ENCODE measurements at regions of chr1 and their contacts with region 1.

Region 1: GRCh38 chr1:235504496-235505222 is 407 bp upstream of the B3GALNT2 start:
- DNase-seq: peak; percentile 99
- H3K4me3 ChIP-seq: peak overlapping the region; percentile 74
- H3K27ac ChIP-seq: peak overlapping the region; percentile 81
- H3K4me1 ChIP-seq: peaks cover 36% of the 10 kb centered on the region
- CTCF ChIP-seq: peak; percentile 80

Region 2: DNA sequence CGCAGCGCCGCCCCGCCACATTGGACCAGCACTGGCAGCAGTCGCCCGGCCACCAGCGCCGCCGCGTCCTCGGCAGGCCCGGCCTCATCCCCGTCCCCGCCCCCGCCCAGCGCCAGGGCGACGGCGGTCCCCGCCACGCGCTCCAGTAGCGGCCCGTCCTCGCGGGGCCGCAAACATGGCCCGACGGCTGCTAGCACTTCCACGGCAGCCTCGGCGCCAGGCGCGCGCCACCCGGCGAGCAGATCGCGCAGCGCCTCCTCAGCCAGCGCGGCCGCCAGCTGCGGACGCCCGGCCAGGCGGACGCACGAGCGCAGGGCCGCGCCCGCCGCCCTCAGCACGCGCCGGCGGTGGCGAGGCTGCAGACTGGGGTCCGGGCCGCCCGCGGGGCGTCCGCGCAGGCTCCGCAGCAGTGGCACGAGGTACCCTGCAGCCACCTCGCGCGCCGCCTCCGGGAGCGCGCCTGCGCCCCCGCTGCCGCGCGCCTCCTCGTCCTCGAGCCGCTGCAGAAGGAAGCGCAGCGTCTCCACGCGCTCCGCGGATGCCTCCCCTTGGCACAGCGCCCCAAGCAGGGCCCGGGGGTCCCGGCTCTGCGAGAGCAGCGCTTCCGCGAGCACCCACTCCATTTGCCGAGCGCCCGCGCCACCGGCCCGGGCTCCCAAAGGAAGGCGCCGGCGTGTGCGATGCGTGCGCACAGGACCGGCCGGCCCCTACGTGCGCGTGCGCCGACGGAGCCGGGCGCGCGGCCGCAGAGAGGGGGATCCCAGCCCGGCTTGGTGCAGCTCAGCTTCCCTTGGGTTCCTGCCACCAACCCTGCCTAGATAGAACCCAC is 1026.0 kb before region 1 on chr1 and contains the start of gene TARBP1:
- CTCF ChIA-PET with region 1: no interaction called
- POLR2A ChIA-PET with region 1: interaction called, 3 read pairs
- intact Hi-C with region 1: loop called (anchors 10 kb)
- DNase-seq: peak; percentile 90
- H3K4me3 ChIP-seq: peak within 1 kb of the TSS; percentile 72
- H3K27ac ChIP-seq: peak within 1 kb of the TSS; percentile 81
- H3K4me1 ChIP-seq: peaks cover 49% of the 10 kb centered on the region
- CTCF ChIP-seq: 0 out of 2 replicates have a peak, but pooled peaks have one; percentile 13
- total RNA-seq, gene TARBP1: 30.0 and 30.5 TPM in 2 replicates

Region 3: DNA sequence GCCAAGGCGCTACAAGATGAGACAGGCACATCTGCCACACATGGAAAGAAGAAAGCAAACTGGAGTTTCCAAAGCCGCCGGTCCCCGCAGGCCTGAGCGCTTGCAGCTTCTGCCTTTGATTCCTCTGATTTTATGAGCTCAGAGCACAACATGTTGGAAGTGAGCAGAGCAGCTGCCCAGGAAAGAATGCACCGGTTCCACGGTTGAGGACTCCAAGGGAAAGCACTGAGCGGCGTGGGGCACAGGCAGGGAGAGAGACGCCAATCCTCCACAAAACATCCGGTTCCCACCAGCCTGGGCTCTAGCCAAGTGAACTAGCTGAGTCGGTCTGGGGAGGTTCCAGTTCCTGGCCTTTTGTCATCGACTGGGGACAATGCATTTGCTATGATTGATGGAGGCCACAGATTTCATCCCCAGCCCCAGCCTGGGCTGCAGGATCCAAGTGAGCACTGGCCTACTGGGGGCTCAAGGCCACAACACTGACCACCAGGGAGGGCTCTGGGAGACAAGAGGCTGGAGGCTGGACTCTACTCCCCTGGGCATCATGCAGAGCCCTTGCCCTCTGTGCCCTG is 641.6 kb before region 1 on chr1:
- CTCF ChIA-PET with region 1: no interaction called
- POLR2A ChIA-PET with region 1: no interaction called
- intact Hi-C with region 1: no loop called
- DNase-seq: no peak
- H3K4me3 ChIP-seq: no peak overlapping the region
- H3K27ac ChIP-seq: no peak overlapping the region
- H3K4me1 ChIP-seq: peaks cover 8% of the 10 kb centered on the region
- CTCF ChIP-seq: no peak

Region 4: DNA sequence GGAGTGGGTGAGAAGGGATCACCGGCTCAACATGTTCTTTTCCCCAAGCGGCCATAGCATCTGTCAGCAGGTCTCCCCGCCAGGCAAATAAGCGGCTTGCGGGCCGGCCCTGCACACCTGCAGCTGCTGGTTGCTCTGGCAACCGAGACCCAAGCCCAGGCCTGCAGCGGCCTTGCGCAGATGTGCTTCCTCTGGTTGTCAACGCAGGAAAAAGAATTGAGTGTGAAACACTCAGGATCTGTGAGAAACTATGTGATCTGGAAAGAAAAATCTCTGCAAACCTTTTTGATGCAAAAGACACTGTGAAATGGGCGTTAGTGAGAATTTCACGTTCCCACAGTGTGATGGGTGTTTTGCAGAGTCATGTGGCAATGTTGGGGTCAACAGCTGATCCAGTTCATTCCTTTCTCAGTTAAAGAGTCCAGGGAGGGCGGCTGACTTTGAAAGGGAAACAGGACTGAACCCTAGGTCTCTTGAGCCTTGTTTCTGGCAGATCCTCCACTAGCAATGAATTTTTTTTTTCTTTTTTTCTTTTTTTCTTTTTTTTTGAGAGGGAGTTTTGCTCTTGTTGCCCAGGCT is 404.4 kb before region 1 on chr1:
- CTCF ChIA-PET with region 1: no interaction called
- POLR2A ChIA-PET with region 1: interaction called, 4 read pairs
- intact Hi-C with region 1: loop called (anchors 5 kb)
- DNase-seq: peak; percentile 79
- H3K4me3 ChIP-seq: peak overlapping the region; percentile 6
- H3K27ac ChIP-seq: peak overlapping the region; percentile 7
- H3K4me1 ChIP-seq: peaks cover 29% of the 10 kb centered on the region
- CTCF ChIP-seq: no peak

Region 5: GRCh38 chr1:235843461-235843961 is 338.9 kb after region 1 on chr1:
- CTCF ChIA-PET with region 1: interaction called, 6 read pairs
- POLR2A ChIA-PET with region 1: interaction called, 4 read pairs
- intact Hi-C with region 1: loop called (anchors 2 kb)
- DNase-seq: peak; percentile 39
- H3K4me3 ChIP-seq: no peak overlapping the region
- H3K27ac ChIP-seq: no peak overlapping the region
- H3K4me1 ChIP-seq: peaks cover 26% of the 10 kb centered on the region
- CTCF ChIP-seq: peak; percentile 82

Region 6: DNA sequence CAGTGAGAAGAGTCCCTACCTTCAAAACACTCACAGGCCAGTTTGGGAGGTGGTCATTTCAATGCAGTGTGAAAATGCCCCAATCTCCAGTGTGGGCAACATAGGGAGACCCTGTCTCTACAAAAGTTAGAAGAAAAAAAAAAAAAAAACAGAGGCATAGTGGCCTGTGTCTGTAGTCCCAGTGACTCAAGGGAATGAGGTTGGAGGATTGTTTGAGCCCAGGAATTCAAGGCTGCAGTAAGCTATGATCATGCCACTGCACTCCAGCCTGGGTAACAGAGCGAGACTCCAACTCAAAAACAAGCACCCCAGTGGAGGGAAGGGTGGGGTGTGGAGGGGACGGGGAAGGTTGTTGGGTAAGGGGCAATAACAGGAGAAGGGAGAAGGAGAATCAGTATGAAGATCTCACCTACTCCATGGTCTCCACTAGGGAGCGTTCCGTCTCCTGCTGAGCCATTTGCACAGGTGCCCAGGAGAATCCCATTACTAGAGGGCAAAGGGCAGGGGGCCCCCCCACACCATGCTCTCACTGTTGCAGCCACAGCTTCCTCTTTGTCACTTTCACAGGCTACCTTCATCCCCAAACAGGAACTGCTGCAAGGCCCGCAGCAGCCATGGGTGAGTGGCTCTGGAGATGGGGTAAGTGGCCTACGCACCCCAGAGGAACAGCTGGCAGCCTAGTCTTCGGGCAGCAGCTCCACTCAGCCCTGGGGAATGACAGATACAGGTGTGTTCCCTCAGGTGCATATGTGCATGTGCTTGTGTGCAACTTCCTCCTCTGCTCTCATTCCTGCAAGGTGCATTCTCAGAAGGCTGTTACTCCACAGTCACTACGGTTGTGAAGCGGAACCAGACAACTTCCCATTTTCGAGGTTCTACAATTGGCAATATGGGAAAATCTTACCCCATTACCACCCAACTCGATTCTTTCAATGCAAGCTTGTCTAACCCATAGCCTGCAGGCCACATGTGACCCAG is 449.9 kb after region 1 on chr1:
- CTCF ChIA-PET with region 1: no interaction called
- POLR2A ChIA-PET with region 1: no interaction called
- intact Hi-C with region 1: loop called (anchors 5 kb)
- DNase-seq: peak; percentile 85
- H3K4me3 ChIP-seq: peak overlapping the region; percentile 23
- H3K27ac ChIP-seq: peak overlapping the region; percentile 39
- H3K4me1 ChIP-seq: peaks cover 22% of the 10 kb centered on the region
- CTCF ChIP-seq: peak; percentile 54; the same call in 1 of the 2 replicates

Region 7: GRCh38 chr1:236281654-236282424 is 777.2 kb after region 1 on chr1 and contains the start of gene ERO1B:
- CTCF ChIA-PET with region 1: no interaction called
- POLR2A ChIA-PET with region 1: no interaction called
- intact Hi-C with region 1: loop called (anchors 2 kb)
- DNase-seq: peak; percentile 99
- H3K4me3 ChIP-seq: peak within 1 kb of the TSS; percentile 85
- H3K27ac ChIP-seq: peak within 1 kb of the TSS; percentile 95
- H3K4me1 ChIP-seq: peaks cover 57% of the 10 kb centered on the region
- CTCF ChIP-seq: no peak
- total RNA-seq, gene ERO1B: 7.0 and 7.6 TPM in 2 replicates